ENCODE measurements at regions of chr15 and their contacts with region 1.

Region 1: GRCh38 chr15:45048794-45049631 is 26.0 kb downstream of the SORD start:
- DNase-seq: no peak
- H3K4me3 ChIP-seq: no peak overlapping the region
- H3K27ac ChIP-seq: peak overlapping the region in 1 of 4 donors; percentile 62
- H3K4me1 ChIP-seq: no peaks in the 10 kb centered on the region
- H3K27me3 ChIP-seq: no peaks in the 10 kb centered on the region
- CTCF ChIP-seq: no peak
- EP300 ChIP-seq: no peak
- POLR2A ChIP-seq: no peak

Region 2: GRCh38 chr15:44861439-44861910 is 187.5 kb before region 1 on chr15:
- in situ Hi-C with region 1: loop called in 1 of 4 experiments (anchors 25 kb)
- intact Hi-C with region 1: no loop called
- DNase-seq: no peak
- H3K4me3 ChIP-seq: no peak overlapping the region
- H3K27ac ChIP-seq: no peak overlapping the region
- H3K4me1 ChIP-seq: no peaks in the 10 kb centered on the region
- H3K27me3 ChIP-seq: no peaks in the 10 kb centered on the region
- CTCF ChIP-seq: no peak
- EP300 ChIP-seq: no peak
- POLR2A ChIP-seq: no peak

Region 3: DNA sequence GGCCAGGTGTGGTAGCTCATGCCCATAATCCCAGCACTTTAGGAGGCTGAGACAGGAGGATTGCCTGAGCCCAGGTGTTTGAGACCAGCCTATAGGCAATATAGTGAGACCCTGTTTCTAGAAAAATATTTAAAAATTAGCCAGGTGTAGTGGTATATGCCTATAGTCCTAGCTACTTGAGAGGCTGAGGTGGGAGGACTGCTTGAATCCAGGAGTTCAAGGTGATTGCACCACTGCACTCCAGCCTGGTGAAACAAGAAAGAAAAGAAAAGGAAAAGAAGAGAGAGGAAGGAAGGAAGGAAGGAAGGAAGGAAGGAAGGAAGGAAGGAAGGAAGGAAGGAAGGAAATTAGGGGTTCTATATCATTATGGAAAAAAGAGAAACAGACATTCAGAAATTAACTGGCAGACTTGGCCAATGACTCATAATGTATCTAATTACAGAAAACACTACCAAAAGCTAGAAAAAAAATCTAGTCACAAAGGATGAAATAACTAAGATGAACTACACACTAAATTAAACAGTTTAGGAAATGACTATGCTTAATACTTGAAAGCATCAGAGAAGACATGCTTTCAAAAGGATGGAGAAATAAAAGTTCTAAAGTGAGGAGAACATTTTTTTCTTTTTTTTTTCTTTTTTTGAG is 137.9 kb before region 1 on chr15:
- in situ Hi-C with region 1: no loop called
- intact Hi-C with region 1: no loop called
- DNase-seq: no peak
- H3K4me3 ChIP-seq: no peak overlapping the region
- H3K27ac ChIP-seq: no peak overlapping the region
- H3K4me1 ChIP-seq: no peaks in the 10 kb centered on the region
- H3K27me3 ChIP-seq: no peaks in the 10 kb centered on the region
- CTCF ChIP-seq: no peak
- EP300 ChIP-seq: no peak
- POLR2A ChIP-seq: no peak